AG04449 (cell line): ENCODE measurements at regions of chr7 and their contacts with region 1.

Region 1: DNA sequence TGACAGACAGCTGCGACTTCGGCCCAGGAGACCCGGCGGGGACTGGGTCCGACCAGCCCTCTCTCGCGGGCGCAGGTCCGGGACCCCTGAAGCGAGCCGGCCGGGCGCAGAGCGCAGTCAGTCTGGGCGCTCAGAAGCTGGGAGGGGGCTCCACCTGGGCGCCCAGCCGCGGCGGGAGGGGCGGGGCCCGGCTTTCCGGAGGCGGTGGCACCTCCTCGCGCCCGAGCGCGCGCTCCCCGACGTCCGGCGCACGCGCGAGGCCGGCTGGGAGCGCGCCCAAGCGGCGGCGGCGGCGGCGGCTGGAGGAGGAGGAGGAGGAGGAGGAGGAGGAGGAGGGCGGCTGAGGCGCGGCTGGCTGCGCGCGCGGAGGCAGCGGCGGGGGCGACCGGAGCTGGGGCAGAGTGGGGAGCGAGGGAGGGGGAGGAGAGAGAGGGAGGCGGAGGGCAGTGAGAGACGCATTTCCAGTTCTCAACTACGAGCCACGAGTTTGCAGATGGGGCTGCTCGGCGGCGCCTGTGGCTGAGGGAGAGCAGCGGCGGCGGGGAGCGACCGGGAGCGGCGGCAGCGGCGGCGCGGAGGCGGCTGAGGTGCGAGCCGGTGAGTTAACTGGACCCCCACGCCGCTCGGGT is at the start of gene PALS2:
- DNase-seq: no peak
- H3K4me3 ChIP-seq: peak within 1 kb of the TSS; percentile 75
- CTCF ChIP-seq: no peak

Region 2: GRCh38 chr7:24587848-24588247 is 14.7 kb after region 1 on chr7:
- CTCF ChIA-PET with region 1: interaction called, 40 read pairs
- POLR2A ChIA-PET with region 1: no interaction called
- DNase-seq: no peak
- H3K4me3 ChIP-seq: no peak overlapping the region
- CTCF ChIP-seq: no peak

Region 3: GRCh38 chr7:24595671-24596418 is 22.7 kb after region 1 on chr7:
- CTCF ChIA-PET with region 1: interaction called, 40 read pairs
- POLR2A ChIA-PET with region 1: no interaction called
- DNase-seq: no peak
- H3K4me3 ChIP-seq: no peak overlapping the region
- CTCF ChIP-seq: no peak

Region 4: GRCh38 chr7:24665564-24666294 is 92.6 kb after region 1 on chr7:
- CTCF ChIA-PET with region 1: interaction called, 96 read pairs
- POLR2A ChIA-PET with region 1: interaction called, 3 read pairs
- DNase-seq: no peak
- H3K4me3 ChIP-seq: no peak overlapping the region
- CTCF ChIP-seq: peak; percentile 57

Region 5: DNA sequence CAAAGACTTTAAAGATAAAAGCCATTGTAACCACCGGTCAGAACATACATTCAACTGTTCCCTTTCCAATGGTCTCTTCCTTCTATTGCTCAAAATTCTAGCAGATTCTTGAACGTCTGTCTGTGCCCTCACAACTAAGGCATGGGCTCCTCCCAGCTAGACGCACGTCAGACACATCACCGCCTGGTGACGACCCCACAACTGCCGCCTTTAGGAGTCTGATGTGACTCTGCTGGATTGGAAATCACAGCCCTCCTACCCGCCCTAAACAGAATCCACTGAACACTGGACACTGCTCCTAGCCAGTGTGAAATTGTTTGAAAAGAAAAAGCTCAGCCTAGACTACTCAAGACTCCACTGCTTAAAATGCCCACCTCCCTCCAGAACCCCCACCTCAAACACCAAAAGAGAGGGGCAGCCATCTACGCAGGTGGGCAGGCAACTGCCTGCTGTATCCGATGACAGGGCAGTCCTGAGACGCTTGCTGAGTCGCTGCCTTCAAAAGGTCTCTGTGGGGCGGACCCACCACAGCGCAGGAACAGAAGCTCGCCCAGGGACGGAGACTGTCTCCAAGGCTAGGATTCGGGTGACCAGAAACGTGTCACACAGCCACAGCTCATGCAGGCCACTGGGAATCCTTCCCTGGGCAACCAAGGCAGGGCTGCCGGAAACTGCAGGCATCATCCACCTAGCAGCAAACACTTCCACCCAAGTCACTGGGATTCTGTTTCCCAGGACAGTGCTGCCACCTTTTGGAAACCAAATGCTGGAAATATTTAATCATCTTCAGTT is 149.5 kb after region 1 on chr7:
- CTCF ChIA-PET with region 1: interaction called, 21 read pairs
- POLR2A ChIA-PET with region 1: no interaction called
- DNase-seq: no peak
- H3K4me3 ChIP-seq: no peak overlapping the region
- CTCF ChIP-seq: peak; percentile 45